ENCODE measurements at regions of chr4 and their contacts with region 1.

Region 1: GRCh38 chr4:54658252-54659093 is 716 bp downstream of the KIT start:
- DNase-seq: peak in 1 of 2 experiments; percentile 78
- H3K4me3 ChIP-seq: peak overlapping the region; percentile 79 to 88 (median 82)
- H3K27ac ChIP-seq: peak overlapping the region; percentile 38; the same call in 1 of the 2 replicates
- H3K4me1 ChIP-seq: peaks cover 6 to 8% (median 7%) of the 10 kb centered on the region in 4 experiments; a peak in 6 of 7 replicates
- H3K27me3 ChIP-seq: peaks cover 3 to 32% (median 24%) of the 10 kb centered on the region in 4 experiments
- CTCF ChIP-seq: peak in 2 of 3 experiments; percentile 23 to 24; a peak in 2 of 4 replicates
- EP300 ChIP-seq: no peak
- POLR2A ChIP-seq: peak in 1 of 2 experiments; percentile 27; a peak in 2 of 3 replicates
- RAD21 ChIP-seq: peak; percentile 4 to 7; a peak in 2 of 4 replicates

Region 2: GRCh38 chr4:54669831-54670230 is 11.4 kb after region 1 on chr4:
- CTCF ChIA-PET with region 1: interaction called, 6 read pairs
- POLR2A ChIA-PET with region 1: interaction called, 22 read pairs
- DNase-seq: no peak
- H3K4me3 ChIP-seq: no peak overlapping the region
- H3K27ac ChIP-seq: no peak overlapping the region
- H3K4me1 ChIP-seq: no peaks in the 10 kb centered on the region; a peak in 1 of 7 replicates
- H3K27me3 ChIP-seq: no peaks in the 10 kb centered on the region
- CTCF ChIP-seq: peak; percentile 44 to 59 (median 56)
- EP300 ChIP-seq: no peak
- POLR2A ChIP-seq: no peak
- RAD21 ChIP-seq: peak; percentile 38 to 50

Region 3: GRCh38 chr4:54703182-54703581 is 44.7 kb after region 1 on chr4:
- CTCF ChIA-PET with region 1: no interaction called
- POLR2A ChIA-PET with region 1: no interaction called
- DNase-seq: no peak
- H3K4me3 ChIP-seq: no peak overlapping the region
- H3K27ac ChIP-seq: no peak overlapping the region
- H3K4me1 ChIP-seq: no peaks in the 10 kb centered on the region
- H3K27me3 ChIP-seq: peaks cover 0 to 1% (median 0%) of the 10 kb centered on the region in 4 experiments; a peak in 1 of 7 replicates
- CTCF ChIP-seq: no peak
- EP300 ChIP-seq: no peak
- POLR2A ChIP-seq: no peak
- RAD21 ChIP-seq: no peak

Region 4: GRCh38 chr4:54714631-54715030 is 56.2 kb after region 1 on chr4:
- CTCF ChIA-PET with region 1: no interaction called
- POLR2A ChIA-PET with region 1: no interaction called
- DNase-seq: no peak
- H3K4me3 ChIP-seq: no peak overlapping the region
- H3K27ac ChIP-seq: no peak overlapping the region
- H3K4me1 ChIP-seq: no peaks in the 10 kb centered on the region
- H3K27me3 ChIP-seq: no peaks in the 10 kb centered on the region
- CTCF ChIP-seq: no peak
- EP300 ChIP-seq: no peak
- POLR2A ChIP-seq: no peak
- RAD21 ChIP-seq: no peak

Region 5: GRCh38 chr4:54742636-54743399 is 84.3 kb after region 1 on chr4:
- CTCF ChIA-PET with region 1: no interaction called
- POLR2A ChIA-PET with region 1: no interaction called
- DNase-seq: no peak
- H3K4me3 ChIP-seq: no peak overlapping the region
- H3K27ac ChIP-seq: no peak overlapping the region
- H3K4me1 ChIP-seq: peaks cover 0 to 5% (median 2%) of the 10 kb centered on the region in 4 experiments; a peak in 2 of 7 replicates
- H3K27me3 ChIP-seq: no peaks in the 10 kb centered on the region
- CTCF ChIP-seq: no peak
- EP300 ChIP-seq: no peak
- POLR2A ChIP-seq: no peak
- RAD21 ChIP-seq: no peak